ENCODE measurements at regions of chr10 and their contacts with region 1.

Region 1: DNA sequence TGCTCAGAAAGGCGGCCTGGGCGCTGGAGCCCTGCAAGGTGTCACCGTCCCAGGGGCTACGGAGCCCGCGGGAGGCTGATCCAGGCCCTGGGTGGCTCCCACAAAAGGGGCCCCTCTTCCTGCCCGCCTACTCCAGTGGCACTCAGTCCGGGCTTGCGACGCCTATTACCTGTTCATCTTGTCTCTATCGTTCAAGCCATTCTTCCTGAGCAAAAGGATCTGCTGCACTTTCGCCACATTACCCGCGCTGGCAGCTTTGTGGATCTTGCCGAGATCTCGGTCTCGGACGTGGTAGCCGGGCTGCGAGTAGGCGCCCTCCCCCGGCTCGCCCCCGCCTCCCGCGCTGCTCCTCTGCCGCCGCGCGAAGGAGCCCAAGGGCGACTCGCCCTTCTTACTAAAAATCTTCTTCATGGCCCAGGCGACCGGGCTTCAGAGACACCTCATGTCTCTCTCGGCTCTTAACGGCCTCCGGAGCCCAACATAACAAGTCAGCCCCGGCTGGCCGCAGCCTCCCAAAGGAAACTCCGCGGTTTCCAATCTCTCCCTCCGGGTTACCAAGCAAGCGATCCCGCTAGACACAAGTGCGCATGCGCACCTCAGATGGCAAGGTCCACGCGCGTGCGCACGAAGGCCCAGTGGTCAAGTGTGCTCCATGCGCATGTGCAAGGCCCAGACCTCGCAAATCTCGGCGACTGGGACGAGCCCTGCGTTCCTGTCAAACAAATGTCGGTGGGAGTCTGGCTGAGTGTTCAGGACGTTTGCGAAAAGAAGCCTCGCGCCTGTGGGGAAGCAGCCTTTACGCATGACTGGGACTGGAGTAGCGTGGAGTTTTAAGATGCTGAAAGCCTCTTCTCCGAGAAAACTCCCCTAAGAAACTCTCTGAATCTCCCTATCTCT is at the start of gene ANKRD26:
- DNase-seq: peak; percentile 92
- ATAC-seq: peak; percentile 93
- H3K4me3 Mint-ChIP-seq: peak within 1 kb of the TSS; percentile 94
- H3K27ac Mint-ChIP-seq: peak within 1 kb of the TSS; percentile 96
- H3K4me1 Mint-ChIP-seq: peaks cover 18% of the 10 kb centered on the region
- H3K27me3 Mint-ChIP-seq: no peaks in the 10 kb centered on the region
- CTCF ChIP-seq: no peak
- total RNA-seq, gene ANKRD26: 6.0 and 7.7 TPM in 2 replicates

Region 2: GRCh38 chr10:27111277-27111676 is 11.1 kb after region 1 on chr10:
- CTCF ChIA-PET with region 1: no interaction called
- POLR2A ChIA-PET with region 1: no interaction called
- intact Hi-C with region 1: loop called (anchors 2 kb)
- DNase-seq: no peak
- ATAC-seq: no peak
- H3K4me3 Mint-ChIP-seq: no peak overlapping the region
- H3K27ac Mint-ChIP-seq: no peak overlapping the region
- H3K4me1 Mint-ChIP-seq: no peaks in the 10 kb centered on the region
- H3K27me3 Mint-ChIP-seq: no peaks in the 10 kb centered on the region
- CTCF ChIP-seq: no peak

Region 3: GRCh38 chr10:27155066-27155754 is 55.0 kb after region 1 on chr10 and contains the start of gene MASTL:
- CTCF ChIA-PET with region 1: no interaction called
- POLR2A ChIA-PET with region 1: interaction called, 18 read pairs
- intact Hi-C with region 1: loop called (anchors 1 kb)
- DNase-seq: peak; percentile 97
- ATAC-seq: peak; percentile 84
- H3K4me3 Mint-ChIP-seq: peak within 1 kb of the TSS; percentile 100
- H3K27ac Mint-ChIP-seq: peak within 1 kb of the TSS; percentile 100
- H3K4me1 Mint-ChIP-seq: peaks cover 44% of the 10 kb centered on the region
- H3K27me3 Mint-ChIP-seq: no peaks in the 10 kb centered on the region
- CTCF ChIP-seq: no peak
- total RNA-seq, gene MASTL: 11.2 and 12.4 TPM in 2 replicates

Region 4: GRCh38 chr10:27504007-27504807 is 404.0 kb after region 1 on chr10 and contains the start of gene RAB18:
- CTCF ChIA-PET with region 1: no interaction called
- POLR2A ChIA-PET with region 1: no interaction called
- intact Hi-C with region 1: loop called (anchors 5 kb)
- DNase-seq: peak; percentile 93
- ATAC-seq: peak; percentile 96
- H3K4me3 Mint-ChIP-seq: peak within 1 kb of the TSS; percentile 100
- H3K27ac Mint-ChIP-seq: peak within 1 kb of the TSS; percentile 99
- H3K4me1 Mint-ChIP-seq: peaks cover 41% of the 10 kb centered on the region
- H3K27me3 Mint-ChIP-seq: no peaks in the 10 kb centered on the region
- CTCF ChIP-seq: no peak
- total RNA-seq, gene RAB18: 48.3 and 55.6 TPM in 2 replicates